HepG2 (cell line): ENCODE measurements at regions of chr5 and their contacts with region 1.

Region 1: DNA sequence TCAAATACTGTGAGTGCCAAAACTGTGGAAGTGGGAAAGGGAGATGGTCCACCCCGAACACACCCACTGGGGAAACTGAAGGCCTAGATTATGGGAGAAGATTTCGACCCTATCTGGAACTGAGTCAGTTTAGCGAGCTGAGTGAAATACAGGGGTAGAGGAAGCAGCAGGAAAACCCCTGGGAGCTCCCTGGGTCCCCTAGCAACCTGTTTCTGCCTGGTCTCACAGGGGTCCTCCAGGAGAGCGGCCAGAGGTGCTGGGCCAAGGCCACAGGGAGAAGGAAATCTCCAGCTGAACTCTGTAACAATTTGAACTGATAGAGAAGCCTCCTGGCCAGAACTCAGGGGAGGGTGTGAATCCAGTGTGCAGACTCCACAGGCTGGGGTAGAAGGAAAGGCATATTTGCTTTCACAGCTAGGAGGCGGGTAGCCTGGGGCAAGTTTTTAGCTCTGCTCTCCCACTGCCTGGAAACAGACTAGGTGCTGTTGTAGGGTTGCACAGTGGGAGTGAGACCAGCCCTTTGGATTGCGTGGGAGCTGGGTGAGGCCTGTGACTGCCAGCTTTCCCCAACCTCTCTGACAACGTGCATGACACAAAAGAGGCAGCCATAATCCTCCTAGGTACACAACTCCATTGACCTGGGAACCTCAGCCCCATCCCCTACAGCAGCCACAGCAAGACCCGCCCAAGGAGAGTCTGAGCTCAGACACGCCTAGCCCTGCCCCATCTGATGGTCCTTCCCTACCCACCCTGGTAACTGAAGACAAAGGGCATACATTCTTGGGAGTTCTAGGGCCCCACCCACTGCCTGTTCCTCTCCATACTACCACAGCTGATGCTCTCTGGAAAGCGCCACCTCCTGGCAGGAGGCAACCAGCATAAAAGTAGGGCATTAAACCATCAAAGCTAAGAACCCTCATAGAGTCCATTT is 78.8 kb upstream of the GPBP1 start:
- DNase-seq: peak; percentile 22
- ATAC-seq: peak; percentile 95
- H3K4me3 ChIP-seq: peak overlapping the region in 1 of 3 experiments; percentile 39; a peak in 1 of 6 replicates
- H3K27ac ChIP-seq: peak overlapping the region; percentile 26
- H3K4me1 ChIP-seq: peaks cover 18% of the 10 kb centered on the region
- H3K27me3 ChIP-seq: no peaks in the 10 kb centered on the region
- CTCF ChIP-seq: peak; percentile 68
- EP300 ChIP-seq: no peak
- POLR2A ChIP-seq: no peak
- RAD21 ChIP-seq: 0 out of 2 replicates have a peak, but pooled peaks have one; percentile 8

Region 2: GRCh38 chr5:56429082-56429891 is 665.7 kb before region 1 on chr5:
- CTCF ChIA-PET with region 1: no interaction called
- POLR2A ChIA-PET with region 1: no interaction called
- in situ Hi-C with region 1: no loop called
- intact Hi-C with region 1: no loop called
- DNase-seq: peak; percentile 47
- ATAC-seq: peak; percentile 84
- H3K4me3 ChIP-seq: no peak overlapping the region
- H3K27ac ChIP-seq: peak overlapping the region; percentile 45
- H3K4me1 ChIP-seq: peaks cover 44% of the 10 kb centered on the region
- H3K27me3 ChIP-seq: no peaks in the 10 kb centered on the region
- CTCF ChIP-seq: no peak
- EP300 ChIP-seq: no peak
- POLR2A ChIP-seq: no peak
- RAD21 ChIP-seq: no peak

Region 3: GRCh38 chr5:57054671-57055070 is 40.3 kb before region 1 on chr5:
- CTCF ChIA-PET with region 1: no interaction called
- POLR2A ChIA-PET with region 1: no interaction called
- in situ Hi-C with region 1: no loop called
- intact Hi-C with region 1: loop called (anchors 1 kb)
- DNase-seq: no peak
- ATAC-seq: no peak
- H3K4me3 ChIP-seq: no peak overlapping the region
- H3K27ac ChIP-seq: no peak overlapping the region
- H3K4me1 ChIP-seq: peaks cover 8% of the 10 kb centered on the region
- H3K27me3 ChIP-seq: no peaks in the 10 kb centered on the region
- CTCF ChIP-seq: no peak
- EP300 ChIP-seq: no peak
- POLR2A ChIP-seq: no peak
- RAD21 ChIP-seq: no peak

Region 4: GRCh38 chr5:57067597-57067924 is 27.5 kb before region 1 on chr5:
- CTCF ChIA-PET with region 1: no interaction called
- POLR2A ChIA-PET with region 1: no interaction called
- in situ Hi-C with region 1: no loop called
- intact Hi-C with region 1: no loop called
- DNase-seq: no peak
- ATAC-seq: no peak
- H3K4me3 ChIP-seq: no peak overlapping the region
- H3K27ac ChIP-seq: no peak overlapping the region
- H3K4me1 ChIP-seq: peaks cover 29% of the 10 kb centered on the region
- H3K27me3 ChIP-seq: peaks cover 0 to 3% of the 10 kb centered on the region in 2 experiments; a peak in 1 of 5 replicates
- CTCF ChIP-seq: no peak
- EP300 ChIP-seq: no peak
- POLR2A ChIP-seq: no peak
- RAD21 ChIP-seq: no peak

Region 5: DNA sequence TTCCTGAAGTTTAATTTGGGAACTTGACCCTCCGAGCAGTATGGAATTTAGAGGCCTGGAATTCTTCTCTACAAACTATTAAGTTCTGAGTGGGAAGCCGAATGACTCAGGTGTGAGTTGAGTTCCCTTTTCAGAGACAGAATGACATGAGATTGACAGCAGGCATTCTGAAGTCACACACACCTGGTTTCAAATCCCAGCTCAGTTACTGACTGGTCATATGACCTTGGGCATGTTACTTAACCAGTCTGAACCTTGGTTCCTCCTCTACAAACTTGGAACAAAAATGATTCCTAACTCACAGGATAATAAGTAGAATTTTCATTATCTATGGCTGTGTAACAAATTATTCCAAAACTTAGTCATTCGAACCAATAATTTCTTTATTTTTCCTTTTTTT is 33.3 kb after region 1 on chr5:
- CTCF ChIA-PET with region 1: no interaction called
- POLR2A ChIA-PET with region 1: no interaction called
- in situ Hi-C with region 1: no loop called
- intact Hi-C with region 1: no loop called
- DNase-seq: peak; percentile 54
- ATAC-seq: peak; percentile 76
- H3K4me3 ChIP-seq: no peak overlapping the region
- H3K27ac ChIP-seq: no peak overlapping the region
- H3K4me1 ChIP-seq: peaks cover 16% of the 10 kb centered on the region
- H3K27me3 ChIP-seq: no peaks in the 10 kb centered on the region
- CTCF ChIP-seq: no peak
- EP300 ChIP-seq: no peak
- POLR2A ChIP-seq: no peak
- RAD21 ChIP-seq: no peak